ENCODE measurements at regions of chr5 and their contacts with region 1.

Region 1: DNA sequence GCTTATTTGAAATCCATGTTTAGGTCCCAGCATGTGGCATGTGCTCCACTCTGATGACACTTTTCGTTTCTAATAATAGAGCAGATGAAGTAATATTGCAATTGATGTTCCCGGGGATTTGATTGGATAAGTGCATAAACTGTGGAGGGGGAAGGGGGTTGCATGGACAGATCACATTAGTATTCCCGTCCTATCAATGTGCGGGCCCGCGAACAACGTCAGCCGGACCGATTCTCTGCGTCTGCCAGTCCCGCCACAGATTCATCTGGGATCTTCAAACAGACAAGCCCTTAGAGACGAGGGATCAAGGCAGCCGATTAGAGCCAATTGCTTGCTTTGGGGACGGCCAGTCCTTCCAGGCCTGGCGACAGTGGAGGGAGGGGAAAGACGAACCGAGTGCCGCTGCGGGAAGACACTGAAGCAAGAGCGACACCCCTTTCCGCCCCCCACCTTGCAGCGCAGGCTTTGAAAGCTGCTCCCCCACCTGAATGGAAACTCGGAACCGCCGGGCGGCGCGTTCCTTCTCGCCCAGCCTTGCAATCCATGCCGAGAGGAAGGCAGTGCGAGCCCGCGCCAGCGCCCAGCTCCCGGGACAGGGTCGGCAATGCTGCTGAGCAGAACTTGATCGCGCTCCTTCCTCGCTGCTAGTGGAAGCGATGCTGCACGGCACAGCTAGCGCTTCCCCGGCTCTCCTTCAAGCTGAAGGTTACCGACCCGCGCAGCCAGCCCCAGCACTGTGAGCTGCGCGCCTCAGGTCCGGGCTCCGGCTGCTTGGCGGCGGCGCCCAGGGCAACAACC is at the start of gene RGS7BP:
- DNase-seq: peak in 1 of 2 donors; percentile 72
- H3K4me3 ChIP-seq: peak within 1 kb of the TSS; percentile 64 to 65
- H3K27ac ChIP-seq: peak within 1 kb of the TSS; percentile 53 to 68
- H3K4me1 ChIP-seq: peaks cover 0 to 53% (median 14%) of the 10 kb centered on the region in 4 donors
- H3K27me3 ChIP-seq: no peaks in the 10 kb centered on the region
- CTCF ChIP-seq: peak; percentile 44 to 52

Region 2: DNA sequence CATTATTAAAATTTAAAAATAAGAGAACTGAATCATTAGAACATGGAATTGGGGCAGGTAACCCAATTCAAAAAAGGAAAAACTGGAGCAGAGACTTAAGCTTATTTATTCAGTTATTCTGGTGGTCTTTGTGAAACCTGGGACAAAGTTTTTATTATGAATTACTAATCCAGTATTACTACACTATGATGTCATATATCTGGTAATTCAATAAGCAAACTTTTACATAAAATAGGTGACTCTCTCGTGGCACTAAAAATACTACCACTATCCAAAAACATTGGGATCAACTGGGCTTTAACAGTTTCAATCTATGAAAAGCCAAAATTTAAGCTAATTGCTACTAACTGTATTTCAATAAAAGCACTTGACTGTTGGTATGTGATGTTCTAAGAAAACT is 135.2 kb before region 1 on chr5:
- intact Hi-C with region 1: no loop called
- DNase-seq: no peak
- H3K4me3 ChIP-seq: no peak overlapping the region
- H3K27ac ChIP-seq: no peak overlapping the region
- H3K4me1 ChIP-seq: no peaks in the 10 kb centered on the region
- H3K27me3 ChIP-seq: no peaks in the 10 kb centered on the region
- CTCF ChIP-seq: no peak

Region 3: GRCh38 chr5:64397552-64397951 is 108.4 kb before region 1 on chr5:
- intact Hi-C with region 1: no loop called
- DNase-seq: no peak
- H3K4me3 ChIP-seq: no peak overlapping the region
- H3K27ac ChIP-seq: no peak overlapping the region
- H3K4me1 ChIP-seq: no peaks in the 10 kb centered on the region
- H3K27me3 ChIP-seq: no peaks in the 10 kb centered on the region
- CTCF ChIP-seq: no peak

Region 4: DNA sequence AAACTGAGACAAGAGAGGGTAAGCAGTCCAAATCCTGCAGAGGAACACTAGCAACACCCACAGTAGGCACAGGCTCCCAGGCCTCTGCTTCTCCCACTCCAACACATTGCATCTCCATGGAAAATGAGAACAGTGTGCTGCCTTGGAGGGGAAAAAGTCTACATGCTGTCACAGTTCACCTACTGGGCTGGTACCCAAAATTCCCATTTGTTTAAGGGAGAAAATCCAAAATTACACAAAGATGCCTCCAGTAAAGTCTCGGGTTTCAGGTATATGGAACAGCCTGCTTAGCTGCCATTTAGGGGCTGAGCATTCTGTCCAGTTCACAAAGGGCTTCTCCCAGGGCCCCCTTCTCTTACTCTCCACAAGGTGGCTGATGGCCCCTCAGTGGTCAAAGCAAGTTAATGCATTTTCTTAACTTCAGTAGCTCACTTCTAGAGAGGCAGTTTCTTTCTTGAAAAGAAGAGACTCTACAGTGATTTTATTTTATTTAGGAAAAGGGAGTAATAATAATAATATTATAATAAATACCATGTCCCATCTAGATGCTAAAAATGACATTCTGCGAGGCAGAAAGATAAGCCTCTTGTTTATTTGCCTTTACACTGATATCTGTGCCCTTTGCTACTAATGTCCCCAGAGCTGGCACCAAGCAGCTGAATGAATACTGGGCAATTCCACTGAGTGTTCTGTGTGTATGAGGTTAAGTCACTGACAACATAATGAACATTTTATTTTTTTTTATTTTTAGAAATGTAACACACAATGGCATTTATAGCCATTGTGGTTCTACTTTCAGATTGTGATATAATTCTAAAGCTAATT is 89.3 kb after region 1 on chr5:
- intact Hi-C with region 1: loop called (anchors 5 kb)
- DNase-seq: no peak
- H3K4me3 ChIP-seq: no peak overlapping the region
- H3K27ac ChIP-seq: peak overlapping the region; percentile 5 to 28
- H3K4me1 ChIP-seq: peaks cover 0 to 19% (median 6%) of the 10 kb centered on the region in 4 donors
- H3K27me3 ChIP-seq: no peaks in the 10 kb centered on the region
- CTCF ChIP-seq: peak; percentile 46 to 64

Region 5: GRCh38 chr5:64612344-64612961 is 106.5 kb after region 1 on chr5:
- intact Hi-C with region 1: loop called (anchors 1 kb)
- DNase-seq: peak in 1 of 2 donors; percentile 40
- H3K4me3 ChIP-seq: no peak overlapping the region
- H3K27ac ChIP-seq: no peak overlapping the region
- H3K4me1 ChIP-seq: peaks cover 0 to 4% (median 0%) of the 10 kb centered on the region in 4 donors
- H3K27me3 ChIP-seq: no peaks in the 10 kb centered on the region
- CTCF ChIP-seq: peak; percentile 71 to 81

Measured in tibial artery (tissue), 4 donors.